ENCODE measurements at regions of chr9 and their contacts with region 1.

Region 1: DNA sequence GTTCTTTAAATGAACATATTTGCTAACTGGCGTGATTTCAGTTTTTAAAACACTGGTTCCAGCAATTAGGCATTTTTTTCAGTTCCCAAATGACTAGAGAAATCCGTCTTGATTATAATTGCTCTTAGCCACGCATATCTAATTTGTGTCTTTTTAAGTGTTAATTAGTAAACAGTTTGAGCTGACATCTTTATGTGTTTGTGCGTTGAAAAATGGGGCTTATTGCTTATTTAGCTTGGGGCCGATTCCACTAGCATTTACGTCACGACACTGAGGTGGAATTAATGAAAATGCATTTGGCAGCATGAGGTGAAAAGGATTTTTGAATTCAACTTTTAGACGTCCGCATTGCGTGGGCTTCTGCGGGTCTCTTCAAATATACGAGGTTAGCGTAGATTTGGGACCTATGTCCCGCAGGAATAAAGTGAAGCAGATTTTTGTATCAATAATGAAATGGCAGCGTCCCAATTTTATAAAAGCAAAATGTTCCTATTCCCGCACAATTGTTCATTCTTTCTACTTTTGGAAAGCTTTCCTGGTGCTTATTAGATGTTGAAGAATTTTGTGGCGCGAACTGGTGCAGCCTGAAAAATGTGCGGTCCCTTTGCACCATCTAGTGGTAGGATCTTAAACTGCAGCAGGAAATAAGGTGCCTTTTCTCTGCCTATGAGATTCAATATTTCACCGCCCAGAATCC is 122.7 kb upstream of the LMX1B start:
- DNase-seq: peak; percentile 53 to 68 (median 61)
- H3K4me3 ChIP-seq: peak overlapping the region in 1 of 3 experiments; percentile 64
- H3K4me3 Mint-ChIP-seq: peak overlapping the region in 1 of 2 donors; percentile 83
- H3K27ac ChIP-seq: no peak overlapping the region
- H3K27ac Mint-ChIP-seq: no peak overlapping the region
- H3K4me1 ChIP-seq: peaks cover 33% of the 10 kb centered on the region in 2 donors
- H3K4me1 Mint-ChIP-seq: peaks cover 42% of the 10 kb centered on the region
- H3K27me3 ChIP-seq: no peaks in the 10 kb centered on the region
- H3K27me3 Mint-ChIP-seq: no peaks in the 10 kb centered on the region
- CTCF ChIP-seq: peak; percentile 90

Region 2: GRCh38 chr9:125407974-125408900 is 1082.8 kb before region 1 on chr9:
- intact Hi-C with region 1: loop called (anchors 5 to 10 kb)
- DNase-seq: peak; percentile 56 to 66 (median 63)
- H3K4me3 ChIP-seq: peak overlapping the region; percentile 35 to 78 (median 37)
- H3K4me3 Mint-ChIP-seq: peak overlapping the region; percentile 73 to 86
- H3K27ac ChIP-seq: no peak overlapping the region
- H3K27ac Mint-ChIP-seq: peak overlapping the region in 2 of 7 donors; percentile 69 to 76
- H3K4me1 ChIP-seq: peaks cover 8 to 15% of the 10 kb centered on the region in 2 donors
- H3K4me1 Mint-ChIP-seq: peaks cover 20% of the 10 kb centered on the region
- H3K27me3 ChIP-seq: peaks cover 0 to 17% of the 10 kb centered on the region in 2 donors
- H3K27me3 Mint-ChIP-seq: peaks cover 24 to 33% (median 30%) of the 10 kb centered on the region in 3 donors
- CTCF ChIP-seq: peak; percentile 97

Region 3: GRCh38 chr9:126240835-126241234 is 250.2 kb before region 1 on chr9:
- intact Hi-C with region 1: no loop called
- DNase-seq: no peak
- H3K4me3 ChIP-seq: no peak overlapping the region
- H3K4me3 Mint-ChIP-seq: no peak overlapping the region
- H3K27ac ChIP-seq: no peak overlapping the region
- H3K27ac Mint-ChIP-seq: no peak overlapping the region
- H3K4me1 ChIP-seq: no peaks in the 10 kb centered on the region
- H3K4me1 Mint-ChIP-seq: peaks cover 2% of the 10 kb centered on the region
- H3K27me3 ChIP-seq: no peaks in the 10 kb centered on the region
- H3K27me3 Mint-ChIP-seq: peaks cover 0 to 7% (median 6%) of the 10 kb centered on the region in 3 donors
- CTCF ChIP-seq: no peak

Region 4: DNA sequence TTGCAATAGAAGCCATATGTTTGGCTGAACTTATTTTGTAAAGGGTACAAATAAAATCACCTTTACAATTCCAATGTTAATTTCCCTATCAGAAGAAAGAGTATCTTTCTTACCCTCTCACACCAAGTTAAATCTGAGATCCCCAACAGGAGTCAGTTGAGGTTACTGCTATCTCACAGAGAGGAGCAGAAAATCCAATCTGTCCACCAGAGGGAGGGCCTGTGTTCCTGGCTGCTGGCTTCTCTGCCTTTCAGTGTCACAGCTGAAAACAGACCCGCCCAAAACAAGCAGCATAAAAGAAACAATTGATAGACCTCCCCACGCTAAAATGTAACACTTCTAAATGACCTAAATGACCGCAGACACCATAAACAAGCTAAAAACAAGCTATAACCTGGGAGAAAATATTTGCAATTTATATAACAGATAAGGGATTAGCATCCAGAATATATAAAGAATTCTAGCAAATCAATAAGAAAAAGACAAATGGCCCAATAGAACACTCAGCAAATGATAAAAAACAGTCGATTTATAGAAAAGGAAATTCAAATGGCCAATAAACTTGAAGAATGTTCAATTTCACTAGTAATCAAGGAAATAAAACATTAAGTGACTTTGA is 188.9 kb before region 1 on chr9:
- intact Hi-C with region 1: loop called (anchors 5 kb)
- DNase-seq: peak; percentile 27 to 41 (median 33)
- H3K4me3 ChIP-seq: no peak overlapping the region
- H3K4me3 Mint-ChIP-seq: no peak overlapping the region
- H3K27ac ChIP-seq: no peak overlapping the region
- H3K27ac Mint-ChIP-seq: no peak overlapping the region
- H3K4me1 ChIP-seq: no peaks in the 10 kb centered on the region
- H3K4me1 Mint-ChIP-seq: peaks cover 2% of the 10 kb centered on the region
- H3K27me3 ChIP-seq: no peaks in the 10 kb centered on the region
- H3K27me3 Mint-ChIP-seq: peaks cover 1 to 4% (median 2%) of the 10 kb centered on the region in 3 donors
- CTCF ChIP-seq: peak; percentile 55

Region 5: GRCh38 chr9:126317513-126317912 is 173.5 kb before region 1 on chr9:
- intact Hi-C with region 1: loop called in 1 of 2 experiments (anchors 5 kb)
- DNase-seq: peak; percentile 30 to 36 (median 30)
- H3K4me3 ChIP-seq: no peak overlapping the region
- H3K4me3 Mint-ChIP-seq: no peak overlapping the region
- H3K27ac ChIP-seq: no peak overlapping the region
- H3K27ac Mint-ChIP-seq: no peak overlapping the region
- H3K4me1 ChIP-seq: no peaks in the 10 kb centered on the region
- H3K4me1 Mint-ChIP-seq: peaks cover 6% of the 10 kb centered on the region
- H3K27me3 ChIP-seq: no peaks in the 10 kb centered on the region
- H3K27me3 Mint-ChIP-seq: peaks cover 0 to 9% (median 0%) of the 10 kb centered on the region in 3 donors
- CTCF ChIP-seq: peak; percentile 65

Region 6: GRCh38 chr9:126398403-126399058 is 92.5 kb before region 1 on chr9:
- intact Hi-C with region 1: loop called in 1 of 2 experiments (anchors 5 kb)
- DNase-seq: peak; percentile 63 to 70 (median 69)
- H3K4me3 ChIP-seq: no peak overlapping the region
- H3K4me3 Mint-ChIP-seq: no peak overlapping the region
- H3K27ac ChIP-seq: no peak overlapping the region
- H3K27ac Mint-ChIP-seq: no peak overlapping the region
- H3K4me1 ChIP-seq: peaks cover 14 to 17% of the 10 kb centered on the region in 2 donors
- H3K4me1 Mint-ChIP-seq: peaks cover 42% of the 10 kb centered on the region
- H3K27me3 ChIP-seq: no peaks in the 10 kb centered on the region
- H3K27me3 Mint-ChIP-seq: no peaks in the 10 kb centered on the region
- CTCF ChIP-seq: peak; percentile 98

Measured in CD14-positive monocyte (primary cell).